Mucosa of descending colon (tissue), 3 donors: ENCODE measurements at regions of chr12 and their contacts with region 1.

Region 1: DNA sequence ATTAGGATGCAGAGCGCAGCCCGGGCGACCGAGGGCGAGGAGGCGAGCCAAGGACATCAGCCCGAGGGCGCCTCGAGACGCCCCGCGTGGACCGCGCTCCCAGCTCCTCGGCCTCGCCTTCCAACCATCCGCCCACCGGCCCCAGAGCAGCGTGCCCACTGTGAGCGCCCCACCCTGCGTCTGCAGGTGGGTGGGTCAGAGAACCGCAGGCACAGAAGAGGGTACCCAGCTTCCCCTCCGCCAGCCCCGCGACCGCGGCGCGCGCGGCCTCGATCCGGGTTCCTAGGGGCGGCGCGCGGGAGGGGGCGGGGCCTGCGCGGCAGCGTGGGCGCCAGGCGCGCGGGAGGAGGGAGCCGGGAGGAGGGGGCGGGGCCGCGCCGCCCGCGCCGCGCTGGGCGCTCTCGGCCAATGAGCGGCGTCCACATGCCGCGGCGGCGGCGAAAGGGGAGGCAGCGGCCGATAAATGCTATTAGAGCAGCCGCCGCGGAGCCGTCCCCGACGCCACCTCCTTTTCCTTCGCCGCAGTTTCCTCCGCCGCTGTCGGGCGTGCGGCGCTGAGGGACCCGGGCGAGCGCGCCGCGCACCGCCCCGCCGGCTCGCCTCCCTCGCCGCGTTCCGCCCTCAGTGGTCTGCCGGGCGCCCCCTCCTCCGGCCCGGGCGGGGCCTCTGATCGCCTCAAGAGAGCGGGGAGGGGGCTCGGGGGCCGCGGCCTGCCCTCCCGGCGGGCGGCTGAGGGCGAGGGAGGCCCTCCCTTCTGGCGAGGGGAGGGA is at the start of gene ATP2A2:
- DNase-seq: peak; percentile 91 to 94 (median 93)
- ATAC-seq: peak; percentile 95
- H3K4me3 ChIP-seq: peak within 1 kb of the TSS; percentile 70
- H3K4me1 ChIP-seq: peaks cover 27% of the 10 kb centered on the region
- CTCF ChIP-seq: no peak
- total RNA-seq, gene ATP2A2: 242 to 287 (median 259) TPM

Region 2: GRCh38 chr12:110245369-110245772 is 35.6 kb before region 1 on chr12:
- intact Hi-C with region 1: loop called in 1 of 2 experiments (anchors 5 kb)
- DNase-seq: peak; percentile 78 to 86 (median 85)
- ATAC-seq: peak; percentile 44
- H3K4me3 ChIP-seq: no peak overlapping the region
- H3K4me1 ChIP-seq: peaks cover 41% of the 10 kb centered on the region
- CTCF ChIP-seq: peak; percentile 57